Activated B cell treated with CpG ODN at 0.5 μM for 24 hours (primary cell): ENCODE measurements at regions of chrX and their contacts with region 1.

Region 1: GRCh38 chrX:19739683-19740082 is 147.7 kb downstream of the SH3KBP1 start:
- DNase-seq: no peak
- ATAC-seq: peak; percentile 57
- H3K4me3 Mint-ChIP-seq: no peak overlapping the region
- H3K27ac Mint-ChIP-seq: no peak overlapping the region
- H3K4me1 Mint-ChIP-seq: peaks cover 46% of the 10 kb centered on the region
- H3K27me3 Mint-ChIP-seq: no peaks in the 10 kb centered on the region
- CTCF ChIP-seq: no peak

Region 2: GRCh38 chrX:18448416-18448815 is 1291.3 kb before region 1 on chrX:
- CTCF ChIA-PET with region 1: no interaction called
- POLR2A ChIA-PET with region 1: no interaction called
- intact Hi-C with region 1: no loop called
- DNase-seq: no peak
- ATAC-seq: no peak
- H3K4me3 Mint-ChIP-seq: no peak overlapping the region
- H3K27ac Mint-ChIP-seq: no peak overlapping the region
- H3K4me1 Mint-ChIP-seq: no peaks in the 10 kb centered on the region
- H3K27me3 Mint-ChIP-seq: no peaks in the 10 kb centered on the region
- CTCF ChIP-seq: no peak

Region 3: GRCh38 chrX:19593690-19594089 is 146.0 kb before region 1 on chrX:
- CTCF ChIA-PET with region 1: interaction called, 4 read pairs
- POLR2A ChIA-PET with region 1: no interaction called
- intact Hi-C with region 1: loop called (anchors 5 kb)
- DNase-seq: no peak
- ATAC-seq: no peak
- H3K4me3 Mint-ChIP-seq: no peak overlapping the region
- H3K27ac Mint-ChIP-seq: no peak overlapping the region
- H3K4me1 Mint-ChIP-seq: peaks cover 2% of the 10 kb centered on the region
- H3K27me3 Mint-ChIP-seq: no peaks in the 10 kb centered on the region
- CTCF ChIP-seq: no peak

Region 4: GRCh38 chrX:19772826-19773628 is 33.3 kb after region 1 on chrX:
- CTCF ChIA-PET with region 1: interaction called, 3 read pairs
- POLR2A ChIA-PET with region 1: interaction called, 14 read pairs
- intact Hi-C with region 1: no loop called
- DNase-seq: no peak
- ATAC-seq: peak; percentile 69
- H3K4me3 Mint-ChIP-seq: peak overlapping the region; percentile 57
- H3K27ac Mint-ChIP-seq: peak overlapping the region; percentile 89
- H3K4me1 Mint-ChIP-seq: peaks cover 74% of the 10 kb centered on the region
- H3K27me3 Mint-ChIP-seq: no peaks in the 10 kb centered on the region
- CTCF ChIP-seq: no peak

Region 5: DNA sequence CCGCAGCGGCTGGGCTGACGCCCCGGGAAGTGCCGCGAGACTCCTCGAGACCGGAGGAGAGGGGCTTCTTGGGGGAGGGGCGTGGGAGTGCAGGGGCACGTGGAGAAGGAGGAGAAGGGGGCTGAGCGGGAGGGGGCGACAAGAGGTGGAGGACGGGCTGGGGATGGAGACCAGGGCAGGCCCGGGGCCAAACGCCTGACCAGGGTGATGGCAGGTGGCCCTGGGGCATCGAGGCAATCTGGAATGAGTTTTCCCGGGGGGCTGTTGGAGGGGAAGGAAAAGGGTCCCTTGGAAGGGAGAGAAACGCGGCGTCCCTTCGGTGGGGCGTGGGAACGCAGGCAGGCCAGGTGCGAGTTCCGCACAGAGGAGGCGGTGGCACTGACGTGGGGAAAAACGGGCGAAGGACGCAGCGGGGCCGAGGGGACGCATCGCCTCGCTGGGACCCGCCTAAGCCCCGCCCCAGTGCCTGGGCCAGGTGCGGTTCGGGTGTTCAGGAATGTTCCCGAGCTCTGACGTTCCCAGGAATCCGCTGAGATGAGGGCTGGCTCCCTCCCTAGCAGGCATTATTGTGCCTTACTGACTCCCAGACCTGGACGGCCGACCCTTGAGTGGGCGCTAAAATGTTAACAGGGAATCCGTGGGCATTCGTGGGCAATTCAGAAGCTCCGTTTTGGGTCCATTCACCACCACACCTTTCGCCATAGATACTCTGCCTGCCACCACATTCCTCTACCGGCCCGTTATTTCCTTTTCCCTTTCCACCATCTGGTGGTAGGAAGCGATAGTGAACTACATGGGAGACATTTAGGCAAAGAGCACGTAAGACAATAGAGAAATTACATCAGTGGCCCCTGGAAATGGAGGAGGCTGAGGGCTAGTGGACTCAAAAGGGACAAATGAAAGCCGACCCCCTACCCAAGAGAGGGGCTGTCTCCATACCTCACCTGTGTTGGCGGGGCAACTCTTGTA is 148.5 kb after region 1 on chrX:
- CTCF ChIA-PET with region 1: interaction called, 20 read pairs
- POLR2A ChIA-PET with region 1: interaction called, 4 read pairs
- intact Hi-C with region 1: loop called (anchors 1 kb)
- DNase-seq: peak; percentile 44
- ATAC-seq: peak; percentile 33
- H3K4me3 Mint-ChIP-seq: peak overlapping the region; percentile 83
- H3K27ac Mint-ChIP-seq: peak overlapping the region; percentile 76
- H3K4me1 Mint-ChIP-seq: peaks cover 36% of the 10 kb centered on the region
- H3K27me3 Mint-ChIP-seq: no peaks in the 10 kb centered on the region
- CTCF ChIP-seq: no peak

Region 6: GRCh38 chrX:20066968-20067708 is 327.5 kb after region 1 on chrX:
- CTCF ChIA-PET with region 1: no interaction called
- POLR2A ChIA-PET with region 1: no interaction called
- intact Hi-C with region 1: loop called (anchors 5 kb)
- DNase-seq: no peak
- ATAC-seq: peak; percentile 76
- H3K4me3 Mint-ChIP-seq: no peak overlapping the region
- H3K27ac Mint-ChIP-seq: no peak overlapping the region
- H3K4me1 Mint-ChIP-seq: peaks cover 3% of the 10 kb centered on the region
- H3K27me3 Mint-ChIP-seq: peaks cover 3% of the 10 kb centered on the region
- CTCF ChIP-seq: no peak